ENCODE measurements at regions of chr17 and their contacts with region 1.

Region 1: GRCh38 chr17:49997791-49998703 is 3.0 kb upstream of the DLX3 start:
- DNase-seq: peak; percentile 66 to 92 (median 83)
- ATAC-seq: peak; percentile 78
- H3K4me3 ChIP-seq: no peak overlapping the region
- H3K4me3 Mint-ChIP-seq: no peak overlapping the region
- H3K27ac ChIP-seq: no peak overlapping the region
- H3K27ac Mint-ChIP-seq: no peak overlapping the region
- H3K4me1 ChIP-seq: peaks cover 31% of the 10 kb centered on the region
- H3K4me1 Mint-ChIP-seq: peaks cover 33% of the 10 kb centered on the region
- H3K27me3 ChIP-seq: peaks cover 38 to 53% of the 10 kb centered on the region in 2 experiments
- H3K27me3 Mint-ChIP-seq: peaks cover 77% of the 10 kb centered on the region
- CTCF ChIP-seq: peak; percentile 85

Region 2: GRCh38 chr17:49694847-49695683 is 303.0 kb before region 1 on chr17:
- CTCF ChIA-PET with region 1: interaction called, 6 read pairs
- POLR2A ChIA-PET with region 1: no interaction called
- intact Hi-C with region 1: loop called in 1 of 2 experiments (anchors 5 kb)
- DNase-seq: peak; percentile 46 to 83 (median 70)
- ATAC-seq: peak; percentile 41
- H3K4me3 ChIP-seq: no peak overlapping the region
- H3K4me3 Mint-ChIP-seq: peak overlapping the region; percentile 24
- H3K27ac ChIP-seq: peak overlapping the region in 1 of 2 experiments; percentile 78
- H3K27ac Mint-ChIP-seq: peak overlapping the region; percentile 91
- H3K4me1 ChIP-seq: peaks cover 40% of the 10 kb centered on the region
- H3K4me1 Mint-ChIP-seq: peaks cover 56% of the 10 kb centered on the region
- H3K27me3 ChIP-seq: no peaks in the 10 kb centered on the region
- H3K27me3 Mint-ChIP-seq: no peaks in the 10 kb centered on the region
- CTCF ChIP-seq: peak; percentile 87

Region 3: GRCh38 chr17:49873466-49873865 is 124.6 kb before region 1 on chr17:
- CTCF ChIA-PET with region 1: interaction called, 102 read pairs
- POLR2A ChIA-PET with region 1: interaction called, 3 read pairs
- intact Hi-C with region 1: no loop called
- DNase-seq: no peak
- ATAC-seq: no peak
- H3K4me3 ChIP-seq: no peak overlapping the region
- H3K4me3 Mint-ChIP-seq: peak overlapping the region; percentile 39
- H3K27ac ChIP-seq: no peak overlapping the region
- H3K27ac Mint-ChIP-seq: peak overlapping the region; percentile 37
- H3K4me1 ChIP-seq: peaks cover 17% of the 10 kb centered on the region
- H3K4me1 Mint-ChIP-seq: peaks cover 18% of the 10 kb centered on the region
- H3K27me3 ChIP-seq: peaks cover 0 to 4% of the 10 kb centered on the region in 2 experiments
- H3K27me3 Mint-ChIP-seq: peaks cover 3% of the 10 kb centered on the region
- CTCF ChIP-seq: no peak

Region 4: DNA sequence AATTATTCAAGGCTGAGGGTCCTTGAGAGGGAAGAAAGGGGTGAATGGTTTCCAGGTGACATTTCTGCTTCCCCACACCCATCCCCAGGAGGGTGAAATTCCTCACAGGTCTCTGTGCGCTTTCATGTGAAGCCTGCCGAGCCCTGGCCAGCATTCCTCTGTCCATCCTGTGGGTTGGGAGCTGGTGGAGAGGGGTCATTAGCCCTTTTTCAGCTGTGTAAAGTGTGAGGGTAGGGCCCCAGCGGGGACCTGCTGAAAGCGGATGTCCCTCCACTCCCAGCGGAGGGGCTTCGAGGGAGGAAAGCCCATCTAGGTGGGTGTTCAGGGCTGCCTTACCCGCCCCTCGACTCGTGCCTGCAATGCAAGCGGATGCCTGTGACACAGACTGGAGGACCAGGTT is 82.4 kb before region 1 on chr17:
- CTCF ChIA-PET with region 1: interaction called, 35 read pairs
- POLR2A ChIA-PET with region 1: no interaction called
- intact Hi-C with region 1: no loop called
- DNase-seq: no peak
- ATAC-seq: no peak
- H3K4me3 ChIP-seq: no peak overlapping the region
- H3K4me3 Mint-ChIP-seq: no peak overlapping the region
- H3K27ac ChIP-seq: no peak overlapping the region
- H3K27ac Mint-ChIP-seq: no peak overlapping the region
- H3K4me1 ChIP-seq: no peaks in the 10 kb centered on the region
- H3K4me1 Mint-ChIP-seq: peaks cover under 1% of the 10 kb centered on the region
- H3K27me3 ChIP-seq: no peaks in the 10 kb centered on the region
- H3K27me3 Mint-ChIP-seq: peaks cover 40% of the 10 kb centered on the region
- CTCF ChIP-seq: no peak

Region 5: GRCh38 chr17:49952209-49952911 is 45.7 kb before region 1 on chr17:
- CTCF ChIA-PET with region 1: interaction called, 255 read pairs
- POLR2A ChIA-PET with region 1: interaction called, 10 read pairs
- intact Hi-C with region 1: loop called (anchors 1 kb)
- DNase-seq: peak; percentile 63 to 87 (median 82)
- ATAC-seq: peak; percentile 98
- H3K4me3 ChIP-seq: no peak overlapping the region
- H3K4me3 Mint-ChIP-seq: no peak overlapping the region
- H3K27ac ChIP-seq: no peak overlapping the region
- H3K27ac Mint-ChIP-seq: no peak overlapping the region
- H3K4me1 ChIP-seq: no peaks in the 10 kb centered on the region
- H3K4me1 Mint-ChIP-seq: no peaks in the 10 kb centered on the region
- H3K27me3 ChIP-seq: no peaks in the 10 kb centered on the region
- H3K27me3 Mint-ChIP-seq: peaks cover 42% of the 10 kb centered on the region
- CTCF ChIP-seq: peak; percentile 71

Region 6: GRCh38 chr17:50009282-50009681 is 11.2 kb after region 1 on chr17:
- CTCF ChIA-PET with region 1: interaction called, 24 read pairs
- POLR2A ChIA-PET with region 1: no interaction called
- intact Hi-C with region 1: no loop called
- DNase-seq: no peak
- ATAC-seq: no peak
- H3K4me3 ChIP-seq: no peak overlapping the region
- H3K4me3 Mint-ChIP-seq: no peak overlapping the region
- H3K27ac ChIP-seq: no peak overlapping the region
- H3K27ac Mint-ChIP-seq: no peak overlapping the region
- H3K4me1 ChIP-seq: no peaks in the 10 kb centered on the region
- H3K4me1 Mint-ChIP-seq: no peaks in the 10 kb centered on the region
- H3K27me3 ChIP-seq: peaks cover 0 to 12% of the 10 kb centered on the region in 2 experiments
- H3K27me3 Mint-ChIP-seq: peaks cover 51% of the 10 kb centered on the region
- CTCF ChIP-seq: no peak

Region 7: GRCh38 chr17:50234581-50234980 is 236.5 kb after region 1 on chr17:
- CTCF ChIA-PET with region 1: no interaction called
- POLR2A ChIA-PET with region 1: no interaction called
- intact Hi-C with region 1: no loop called
- DNase-seq: no peak
- ATAC-seq: no peak
- H3K4me3 ChIP-seq: no peak overlapping the region
- H3K4me3 Mint-ChIP-seq: no peak overlapping the region
- H3K27ac ChIP-seq: no peak overlapping the region
- H3K27ac Mint-ChIP-seq: no peak overlapping the region
- H3K4me1 ChIP-seq: no peaks in the 10 kb centered on the region
- H3K4me1 Mint-ChIP-seq: no peaks in the 10 kb centered on the region
- H3K27me3 ChIP-seq: peaks cover 0 to 10% of the 10 kb centered on the region in 2 experiments
- H3K27me3 Mint-ChIP-seq: peaks cover 27% of the 10 kb centered on the region
- CTCF ChIP-seq: no peak

Measured in CD8-positive, alpha-beta T cell (primary cell).